ENCODE measurements at regions of chr6 and their contacts with region 1.

Region 1: GRCh38 chr6:35146453-35146852 is 5.3 kb upstream of the TCP11 start:
- DNase-seq: peak; percentile 64
- ATAC-seq: peak; percentile 93

Region 2: GRCh38 chr6:35209081-35209480 is 62.6 kb after region 1 on chr6:
- intact Hi-C with region 1: loop called (anchors 5 kb)
- DNase-seq: no peak
- ATAC-seq: no peak

Region 3: GRCh38 chr6:35240840-35241801 is 94.7 kb after region 1 on chr6:
- intact Hi-C with region 1: loop called (anchors 5 kb)
- DNase-seq: peak; percentile 85
- ATAC-seq: peak; percentile 25

Region 4: DNA sequence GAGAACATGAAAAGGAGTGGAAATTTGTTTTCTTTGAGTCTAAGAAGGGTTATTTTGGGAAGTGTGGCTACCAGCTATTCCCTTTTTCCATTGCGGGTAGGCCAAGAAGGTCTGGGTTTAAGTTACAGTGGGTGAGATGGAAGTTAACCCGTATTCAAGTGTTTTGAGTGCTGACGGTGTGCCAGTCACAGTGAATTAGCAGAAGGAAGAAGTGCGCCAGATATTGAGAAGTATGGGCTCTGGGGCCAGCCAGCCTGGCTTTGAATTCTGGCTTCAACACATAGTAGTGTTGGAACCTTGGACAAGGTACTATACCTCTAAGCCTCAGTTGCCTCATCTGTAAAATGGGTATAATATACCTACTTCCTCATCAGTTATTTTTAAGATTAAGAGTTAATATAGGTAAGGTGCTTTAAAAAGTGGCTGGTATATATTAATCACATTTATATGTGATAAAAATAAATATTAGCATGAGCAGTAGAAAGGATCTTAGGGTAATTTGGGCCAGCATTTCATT is 129.3 kb after region 1 on chr6:
- intact Hi-C with region 1: no loop called
- DNase-seq: no peak
- ATAC-seq: peak; percentile 8

Region 5: DNA sequence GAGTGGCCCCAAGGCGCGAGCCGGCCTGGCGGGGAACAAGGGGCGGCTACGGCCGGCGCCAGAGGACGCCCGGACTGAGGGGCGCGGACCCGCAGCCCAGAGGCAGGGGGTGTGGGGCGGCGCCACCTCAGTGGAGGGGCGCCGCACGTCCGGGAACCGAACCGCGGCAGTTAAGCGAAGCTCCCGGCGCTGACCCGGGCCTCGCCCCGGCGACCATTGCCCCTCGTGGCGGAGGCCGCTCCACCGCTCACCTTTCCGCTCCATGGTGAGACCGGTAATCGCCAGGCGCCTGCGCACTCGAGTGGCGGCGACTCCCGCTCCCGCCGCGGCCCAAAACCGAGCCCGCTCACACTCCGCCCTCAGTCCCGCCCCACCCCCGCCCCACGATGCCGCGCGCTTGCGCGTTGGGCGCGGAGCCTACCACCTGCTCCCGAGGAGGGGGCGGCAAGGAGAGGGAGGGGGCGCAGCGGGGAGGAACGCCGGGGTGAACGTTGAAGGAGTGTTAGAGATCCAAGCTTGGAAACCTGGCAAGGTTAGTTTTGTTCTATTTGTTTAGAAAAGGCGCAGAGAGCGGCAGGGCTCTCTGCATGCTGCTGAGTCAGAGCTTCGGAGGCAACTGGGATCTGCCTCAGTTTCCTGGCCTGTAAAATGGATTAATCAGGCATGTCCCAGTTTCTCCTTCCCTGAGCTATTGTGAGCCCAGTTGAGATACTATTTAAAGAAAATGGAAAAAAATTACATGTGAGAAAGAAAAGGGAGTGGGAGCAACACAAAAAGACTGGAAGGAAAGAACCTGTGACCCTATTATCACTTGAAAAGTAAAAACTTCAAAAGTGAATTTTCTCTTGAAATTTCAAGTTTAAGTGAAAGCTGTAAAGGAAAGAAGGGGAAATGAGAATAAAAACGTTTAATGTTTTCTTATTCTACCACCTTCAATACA is 774.6 kb after region 1 on chr6 and contains the start of gene SRPK1:
- intact Hi-C with region 1: no loop called
- DNase-seq: peak; percentile 94
- ATAC-seq: peak; percentile 98
- total RNA-seq, gene SRPK1: 19.6 TPM

Measured in left ventricle myocardium superior (tissue), 1 donor.